Activated T-helper 1 cell treated with anti-CD3 and anti-CD28 coated beads, Interleukin-12 subunit alpha, Interleukin-12 subunit beta, Interleukin-2, Interleukin-4 antibody, amounts not matched to agents 30 ng/mL and 10 ng/mL and 1 ng/mL, durations not matched to agents 14 hours and 24 hours and 36 hours (primary cell): ENCODE measurements at regions of chr5 and their contacts with region 1.

Region 1: DNA sequence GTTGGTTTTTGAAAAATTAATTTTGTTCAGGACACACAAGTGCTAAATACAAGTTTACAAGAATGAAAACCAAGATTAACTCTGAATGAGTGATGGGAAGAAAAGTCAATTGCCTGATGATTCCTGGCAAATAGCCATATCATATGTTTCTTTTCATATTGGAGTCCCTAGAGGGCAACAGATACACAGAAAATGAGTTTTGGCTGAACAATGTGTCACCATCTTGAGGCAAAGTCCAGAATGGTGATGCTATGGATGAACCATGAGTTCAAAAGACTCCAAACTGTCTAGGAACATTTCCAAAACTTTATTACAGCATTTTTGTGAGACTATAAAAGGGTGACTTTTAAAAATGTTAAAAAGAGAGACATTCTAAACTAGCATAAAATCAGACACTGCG is 382.9 kb downstream of the TMEM161B start:
- DNase-seq: no peak
- H3K4me3 Mint-ChIP-seq: no peak overlapping the region
- H3K27ac Mint-ChIP-seq: no peak overlapping the region
- H3K4me1 Mint-ChIP-seq: no peaks in the 10 kb centered on the region
- H3K27me3 Mint-ChIP-seq: peaks cover 1% of the 10 kb centered on the region

Region 2: GRCh38 chr5:87924451-87925126 is 38.8 kb after region 1 on chr5:
- intact Hi-C with region 1: loop called (anchors 1 kb)
- DNase-seq: no peak
- H3K4me3 Mint-ChIP-seq: no peak overlapping the region
- H3K27ac Mint-ChIP-seq: no peak overlapping the region
- H3K4me1 Mint-ChIP-seq: no peaks in the 10 kb centered on the region
- H3K27me3 Mint-ChIP-seq: no peaks in the 10 kb centered on the region

Region 3: GRCh38 chr5:88355490-88356050 is 469.8 kb after region 1 on chr5:
- intact Hi-C with region 1: no loop called
- DNase-seq: no peak
- H3K4me3 Mint-ChIP-seq: no peak overlapping the region
- H3K27ac Mint-ChIP-seq: no peak overlapping the region
- H3K4me1 Mint-ChIP-seq: no peaks in the 10 kb centered on the region
- H3K27me3 Mint-ChIP-seq: peaks cover 2% of the 10 kb centered on the region